ENCODE measurements at regions of chr2 and their contacts with region 1.

Region 1: GRCh38 chr2:48227617-48228344 is 302.2 kb upstream of the STON1 start:
- DNase-seq: no peak
- ATAC-seq: no peak
- H3K4me3 ChIP-seq: no peak overlapping the region
- H3K4me3 Mint-ChIP-seq: no peak overlapping the region
- H3K27ac ChIP-seq: no peak overlapping the region
- H3K27ac Mint-ChIP-seq: no peak overlapping the region
- H3K4me1 ChIP-seq: no peaks in the 10 kb centered on the region
- H3K4me1 Mint-ChIP-seq: no peaks in the 10 kb centered on the region
- H3K27me3 ChIP-seq: no peaks in the 10 kb centered on the region
- H3K27me3 Mint-ChIP-seq: no peaks in the 10 kb centered on the region
- CTCF ChIP-seq: no peak

Region 2: DNA sequence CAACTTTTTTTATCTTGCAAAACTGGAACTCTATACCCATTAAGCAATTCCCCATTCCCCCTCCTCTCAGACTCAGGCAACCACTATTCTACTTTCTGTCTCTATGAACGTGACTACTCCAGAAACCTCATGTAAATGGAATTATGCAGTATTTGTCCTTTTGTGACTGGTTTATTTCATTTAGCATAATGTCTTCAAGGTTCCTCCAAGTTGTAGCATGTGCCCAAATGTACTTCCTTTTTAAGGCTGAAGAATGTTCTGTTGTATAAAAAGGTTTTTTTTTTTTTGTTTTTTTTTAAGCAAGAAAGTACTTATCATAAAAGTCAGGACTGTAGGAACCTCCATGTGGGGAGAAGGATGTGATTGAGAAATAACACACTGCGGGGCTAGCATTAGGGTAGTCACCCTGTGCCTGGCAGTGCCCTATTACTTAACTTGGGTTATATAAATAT is 58.6 kb before region 1 on chr2:
- CTCF ChIA-PET with region 1: no interaction called
- POLR2A ChIA-PET with region 1: no interaction called
- intact Hi-C with region 1: loop called in 1 of 2 experiments (anchors 5 kb)
- DNase-seq: no peak
- ATAC-seq: no peak
- H3K4me3 ChIP-seq: no peak overlapping the region
- H3K4me3 Mint-ChIP-seq: no peak overlapping the region
- H3K27ac ChIP-seq: no peak overlapping the region
- H3K27ac Mint-ChIP-seq: no peak overlapping the region
- H3K4me1 ChIP-seq: no peaks in the 10 kb centered on the region
- H3K4me1 Mint-ChIP-seq: no peaks in the 10 kb centered on the region
- H3K27me3 ChIP-seq: no peaks in the 10 kb centered on the region
- H3K27me3 Mint-ChIP-seq: no peaks in the 10 kb centered on the region
- CTCF ChIP-seq: no peak

Measured in CD8-positive, alpha-beta T cell (primary cell).